ENCODE measurements at regions of chr19 and their contacts with region 1.

Region 1: DNA sequence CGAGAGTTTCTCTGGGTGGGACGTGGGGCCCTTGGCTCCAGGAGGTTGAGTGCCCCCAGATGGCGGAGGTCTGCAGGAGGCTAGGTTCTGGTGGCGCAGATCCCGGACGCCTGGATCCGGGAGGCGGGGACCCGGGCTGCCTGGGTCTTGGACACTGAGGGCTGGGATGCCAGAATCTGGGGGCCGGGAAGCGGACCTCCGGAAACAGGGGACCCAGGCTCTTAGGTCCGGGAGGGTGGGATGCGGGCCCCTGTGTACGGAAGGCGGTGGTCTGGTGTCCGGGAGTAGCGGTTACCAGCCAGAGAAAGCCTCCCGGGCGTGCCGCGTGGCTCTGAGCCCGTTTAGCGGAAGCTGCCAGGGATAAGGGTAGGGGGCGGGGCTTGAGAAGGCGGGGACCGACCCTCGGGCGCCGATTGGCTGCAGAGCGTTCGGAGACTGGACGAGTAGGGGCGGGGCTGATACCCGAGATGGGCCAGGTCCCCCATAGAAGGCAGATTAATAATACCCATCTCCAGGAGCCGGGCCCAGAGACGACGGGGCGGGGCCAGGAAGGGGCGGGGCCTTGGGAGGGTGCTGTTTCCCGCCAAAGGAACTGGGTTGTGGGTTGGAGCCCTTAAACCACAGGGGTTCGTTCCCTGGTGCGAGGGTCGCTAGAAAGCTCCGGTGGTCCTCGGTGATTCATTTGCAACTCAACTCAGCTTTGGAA is at the start of gene SLC1A5:
- DNase-seq: peak; percentile 97
- H3K4me3 Mint-ChIP-seq: peak within 1 kb of the TSS; percentile 95
- H3K27ac Mint-ChIP-seq: peak within 1 kb of the TSS; percentile 93
- H3K4me1 Mint-ChIP-seq: peaks cover 44% of the 10 kb centered on the region
- H3K27me3 Mint-ChIP-seq: no peaks in the 10 kb centered on the region
- total RNA-seq, gene SLC1A5: 203 and 208 TPM in 2 replicates

Region 2: DNA sequence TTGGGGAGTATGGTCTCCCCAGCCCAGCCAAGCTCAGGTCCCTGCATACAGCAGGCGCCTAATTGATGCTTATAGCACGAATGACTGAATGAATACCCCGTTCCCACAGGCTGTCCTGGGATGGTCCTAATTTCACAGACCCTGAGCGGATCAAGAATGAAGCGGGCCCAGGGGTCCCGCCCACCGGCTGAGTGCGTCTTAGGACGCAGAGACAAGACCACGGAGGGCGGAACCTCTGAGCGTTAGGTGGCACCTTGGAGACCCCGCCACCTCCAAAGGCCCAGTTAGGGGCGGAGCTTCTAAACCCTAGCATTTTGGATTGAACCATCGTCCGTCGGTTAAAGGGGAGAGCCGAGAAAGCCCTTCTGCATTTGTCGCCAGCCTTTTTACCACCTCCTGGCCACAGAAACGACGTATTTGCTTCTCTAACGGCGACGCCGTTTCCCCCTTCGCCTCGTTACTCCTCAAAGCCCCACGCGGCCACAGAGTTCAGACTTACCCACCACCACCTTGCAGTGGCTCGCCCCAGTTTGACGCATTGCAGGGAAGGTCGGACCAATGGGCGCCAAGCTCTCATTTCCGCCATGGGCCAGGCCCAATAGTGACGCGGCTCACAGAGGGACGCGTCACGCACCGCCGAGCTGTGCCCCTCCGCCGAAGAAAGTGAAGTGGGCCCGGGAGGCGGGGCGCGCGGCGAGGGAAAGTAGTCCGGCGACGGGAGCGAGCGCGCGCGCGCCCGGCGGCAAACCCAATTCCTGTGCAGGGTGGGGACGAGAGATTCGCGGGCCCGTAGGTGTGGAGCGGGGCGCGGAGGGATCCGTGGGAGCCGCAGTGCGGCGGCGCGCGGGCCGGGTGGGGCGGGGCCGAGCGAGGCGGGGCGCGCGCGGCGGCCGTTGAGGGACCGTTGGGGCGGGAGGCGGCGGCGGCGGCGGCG is 187.8 kb before region 1 on chr19:
- intact Hi-C with region 1: loop called (anchors 5 kb)
- DNase-seq: peak; percentile 96
- H3K4me3 Mint-ChIP-seq: peak overlapping the region; percentile 93
- H3K27ac Mint-ChIP-seq: peak overlapping the region; percentile 100
- H3K4me1 Mint-ChIP-seq: peaks cover 18% of the 10 kb centered on the region
- H3K27me3 Mint-ChIP-seq: peaks cover 5% of the 10 kb centered on the region

Region 3: GRCh38 chr19:46678110-46678732 is 110.2 kb before region 1 on chr19:
- intact Hi-C with region 1: no loop called
- DNase-seq: peak; percentile 56
- H3K4me3 Mint-ChIP-seq: no peak overlapping the region
- H3K27ac Mint-ChIP-seq: peak overlapping the region; percentile 46
- H3K4me1 Mint-ChIP-seq: peaks cover 8% of the 10 kb centered on the region
- H3K27me3 Mint-ChIP-seq: no peaks in the 10 kb centered on the region

Region 4: DNA sequence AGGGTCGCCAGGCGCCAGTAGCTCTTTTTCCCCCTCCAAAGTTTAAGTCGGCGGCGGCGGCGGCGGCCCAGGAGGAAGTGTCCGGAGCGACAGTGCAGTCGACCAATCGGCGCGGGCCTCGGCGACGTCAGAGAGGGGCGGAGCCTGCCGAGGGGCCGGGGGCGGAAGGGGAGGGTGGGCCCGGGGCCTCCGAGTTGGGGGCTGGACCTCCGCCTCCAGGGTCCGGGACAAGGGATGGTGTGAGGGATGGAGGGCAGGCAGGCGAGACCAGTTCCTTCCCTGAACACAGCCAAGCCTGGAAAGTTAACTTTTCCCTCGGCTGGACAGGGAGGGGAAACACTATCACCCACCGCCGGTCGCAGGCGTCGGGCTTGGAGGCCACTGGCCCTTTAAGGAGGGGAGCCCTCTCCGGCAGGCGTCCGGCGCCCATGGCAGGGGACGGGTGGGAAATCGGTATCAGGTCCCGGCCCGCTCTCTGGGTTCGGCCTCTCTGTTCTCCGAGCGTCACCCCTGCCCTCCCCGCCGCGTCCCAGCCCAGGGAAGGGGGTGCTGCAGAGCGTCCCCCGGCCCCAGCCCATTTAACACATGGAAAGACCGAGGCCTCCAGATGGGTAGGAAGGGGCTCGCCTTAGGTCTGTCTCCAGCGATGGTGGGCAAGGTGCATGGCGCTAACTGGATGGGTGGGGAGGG is 71.2 kb before region 1 on chr19 and contains the start of gene PRKD2:
- intact Hi-C with region 1: loop called (anchors 2 kb)
- DNase-seq: peak; percentile 84
- H3K4me3 Mint-ChIP-seq: peak within 1 kb of the TSS; percentile 94
- H3K27ac Mint-ChIP-seq: peak within 1 kb of the TSS; percentile 92
- H3K4me1 Mint-ChIP-seq: peaks cover 39% of the 10 kb centered on the region
- H3K27me3 Mint-ChIP-seq: no peaks in the 10 kb centered on the region
- total RNA-seq, gene PRKD2: 77.9 and 79.8 TPM in 2 replicates

Region 5: DNA sequence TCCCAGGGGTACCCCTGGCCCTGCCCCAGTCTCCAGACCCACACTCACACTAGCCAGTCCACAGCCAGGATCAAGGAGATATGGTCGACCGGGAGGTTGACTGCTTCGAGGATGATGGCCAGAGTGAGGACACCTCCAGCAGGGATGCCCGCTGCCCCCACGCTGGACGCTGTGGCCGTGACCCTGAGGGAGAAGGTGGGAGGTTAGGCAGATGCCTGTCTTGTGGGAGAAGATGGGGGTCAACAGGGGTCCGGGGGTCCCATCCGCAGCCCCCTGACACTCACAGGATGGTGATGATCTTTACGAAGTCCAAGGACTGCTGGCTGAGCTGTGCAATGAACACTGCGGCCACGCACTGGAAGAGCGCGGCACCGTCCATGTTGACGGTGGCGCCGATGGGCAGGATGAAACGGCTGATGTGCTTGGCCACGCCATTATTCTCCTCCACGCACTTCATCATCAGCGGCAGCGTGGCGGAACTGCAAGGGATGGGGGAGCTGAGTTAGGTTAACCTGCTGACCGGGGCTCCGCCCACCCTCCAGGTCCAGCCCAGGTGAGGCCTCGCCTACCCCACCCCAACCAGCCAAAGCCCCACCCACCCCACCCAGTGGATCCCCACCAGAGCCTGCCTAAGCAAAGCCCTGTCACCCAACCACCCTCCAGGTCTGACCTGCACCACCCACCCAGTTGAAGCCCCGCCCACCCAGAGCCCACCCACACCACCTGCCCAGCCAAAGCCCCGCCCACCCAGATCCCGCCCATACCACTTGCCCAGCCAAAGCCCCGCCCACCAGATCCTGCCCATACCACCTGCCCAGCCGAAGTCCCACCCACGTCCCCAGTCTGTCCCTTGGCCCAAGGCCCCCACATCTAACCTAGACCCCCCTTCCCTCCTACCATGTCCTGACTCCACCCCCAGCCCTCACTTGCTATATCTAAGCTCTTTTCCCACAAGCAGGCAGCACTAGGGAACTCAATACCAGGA is 11.2 kb before region 1 on chr19:
- intact Hi-C with region 1: no loop called
- DNase-seq: no peak
- H3K4me3 Mint-ChIP-seq: no peak overlapping the region
- H3K27ac Mint-ChIP-seq: no peak overlapping the region
- H3K4me1 Mint-ChIP-seq: peaks cover 7% of the 10 kb centered on the region
- H3K27me3 Mint-ChIP-seq: no peaks in the 10 kb centered on the region

Region 6: DNA sequence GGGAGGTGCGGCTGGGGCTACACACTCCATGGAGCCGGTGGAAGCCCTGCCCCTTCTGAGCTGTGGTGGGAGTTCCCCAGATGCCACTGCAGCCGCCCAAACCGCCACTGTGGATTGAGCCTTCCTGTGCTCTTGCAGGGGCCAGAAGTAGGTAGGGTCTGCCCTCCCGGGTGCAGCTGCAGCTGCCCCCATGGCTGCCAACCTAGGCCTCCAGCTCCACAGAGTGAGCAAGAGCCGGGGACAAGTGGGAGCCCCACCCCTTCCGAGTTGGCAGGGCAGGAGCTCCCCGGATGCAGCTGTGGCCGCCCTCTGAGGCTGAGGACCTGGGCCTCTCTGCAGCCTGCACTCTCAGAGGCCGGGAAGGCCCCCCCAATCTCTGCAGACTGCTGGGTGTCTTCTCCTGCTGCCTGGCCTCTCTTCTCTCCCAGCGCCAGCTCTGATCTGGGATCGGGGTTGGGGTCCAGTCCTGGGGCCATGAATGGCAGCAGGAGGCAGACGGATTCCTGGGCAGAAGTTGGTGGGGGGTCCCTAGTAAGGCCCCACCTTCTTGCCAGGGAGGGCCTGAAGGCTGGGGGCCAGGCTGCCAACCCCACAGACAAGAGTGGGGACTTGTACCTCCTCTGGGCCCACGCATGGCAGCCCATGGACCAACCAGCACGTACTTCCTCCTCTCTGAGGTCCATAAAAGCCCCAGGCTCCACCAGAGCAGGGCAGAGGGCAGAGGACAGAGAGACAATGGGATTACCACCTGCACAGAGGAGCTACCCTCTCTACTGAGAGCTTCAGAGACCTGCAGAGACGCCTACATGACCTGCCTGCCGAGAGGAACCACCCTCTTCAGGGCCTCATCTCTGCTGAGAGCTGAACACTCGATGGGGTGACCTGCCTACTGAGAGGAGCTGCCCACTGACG is 33.3 kb after region 1 on chr19:
- intact Hi-C with region 1: loop called (anchors 2 kb)
- DNase-seq: peak; percentile 49
- H3K4me3 Mint-ChIP-seq: peak overlapping the region; percentile 5
- H3K27ac Mint-ChIP-seq: peak overlapping the region; percentile 46
- H3K4me1 Mint-ChIP-seq: peaks cover 37% of the 10 kb centered on the region
- H3K27me3 Mint-ChIP-seq: no peaks in the 10 kb centered on the region

Region 7: GRCh38 chr19:46954993-46955812 is 166.8 kb after region 1 on chr19:
- intact Hi-C with region 1: loop called (anchors 2 kb)
- DNase-seq: peak; percentile 46
- H3K4me3 Mint-ChIP-seq: peak overlapping the region; percentile 75
- H3K27ac Mint-ChIP-seq: peak overlapping the region; percentile 92
- H3K4me1 Mint-ChIP-seq: peaks cover 68% of the 10 kb centered on the region
- H3K27me3 Mint-ChIP-seq: no peaks in the 10 kb centered on the region

Region 8: DNA sequence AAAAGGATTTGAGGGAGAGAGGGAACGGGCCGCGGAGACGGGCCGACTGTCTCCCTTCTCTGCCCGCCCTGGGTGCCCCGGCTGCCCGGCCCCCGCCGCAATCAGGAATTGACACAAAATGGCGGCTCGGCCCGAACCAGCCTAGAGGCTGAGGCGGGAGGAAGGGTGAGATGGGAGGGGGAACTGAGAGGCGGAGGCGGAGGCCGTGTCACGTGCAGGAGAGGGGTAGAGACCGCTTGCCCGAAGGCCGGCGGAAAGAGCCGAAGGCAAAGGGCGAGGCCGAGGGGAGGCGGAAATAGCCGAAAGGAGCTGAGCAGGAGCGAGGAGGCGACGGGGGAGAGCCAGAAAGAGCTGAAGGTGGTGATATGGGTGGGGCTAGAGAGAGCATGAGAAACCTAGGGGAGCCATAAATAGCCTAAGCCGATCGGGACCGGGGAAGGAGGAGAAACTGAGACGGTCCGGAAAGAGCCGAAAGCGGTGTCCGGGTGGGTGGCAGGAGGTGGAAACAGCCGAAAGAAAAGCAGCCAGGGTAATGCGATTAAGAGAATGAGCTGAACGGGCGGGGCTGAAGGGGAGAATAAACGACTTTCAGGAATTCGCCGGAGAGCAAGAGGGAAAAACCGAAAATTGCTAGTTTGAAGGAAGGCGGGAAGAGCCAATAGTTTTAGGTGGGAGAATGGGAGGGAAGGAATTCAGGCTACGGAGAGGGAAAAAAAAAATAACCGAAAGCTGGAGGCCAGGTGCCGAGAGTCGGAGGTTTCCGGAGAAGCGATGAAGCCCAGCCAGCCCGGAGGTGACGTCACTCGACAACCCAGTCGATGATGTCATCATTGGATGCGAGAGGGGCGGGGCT is 324.8 kb after region 1 on chr19 and contains the start of gene ZC3H4:
- intact Hi-C with region 1: loop called (anchors 2 kb)
- DNase-seq: peak; percentile 100
- H3K4me3 Mint-ChIP-seq: peak within 1 kb of the TSS; percentile 95
- H3K27ac Mint-ChIP-seq: peak within 1 kb of the TSS; percentile 99
- H3K4me1 Mint-ChIP-seq: peaks cover 26% of the 10 kb centered on the region
- H3K27me3 Mint-ChIP-seq: no peaks in the 10 kb centered on the region
- total RNA-seq, gene ZC3H4: 97.1 and 104 TPM in 2 replicates